CD4-positive, alpha-beta T cell (primary cell): ENCODE measurements at regions of chr22 and their contacts with region 1.

Region 1: GRCh38 chr22:31345331-31346254 is 553 bp downstream of the PATZ1 start:
- DNase-seq: peak; percentile 84 to 97 (median 90)
- ATAC-seq: peak; percentile 69
- H3K4me3 ChIP-seq: peak overlapping the region; percentile 88
- H3K4me3 Mint-ChIP-seq: peak overlapping the region; percentile 97
- H3K27ac ChIP-seq: peak overlapping the region in 1 of 2 donors; percentile 69
- H3K27ac Mint-ChIP-seq: peak overlapping the region; percentile 95
- H3K4me1 ChIP-seq: peaks cover 65% of the 10 kb centered on the region
- H3K4me1 Mint-ChIP-seq: peaks cover 54% of the 10 kb centered on the region
- H3K27me3 ChIP-seq: no peaks in the 10 kb centered on the region
- H3K27me3 Mint-ChIP-seq: no peaks in the 10 kb centered on the region
- CTCF ChIP-seq: peak; percentile 73

Region 2: GRCh38 chr22:29883045-29883774 is 1462.4 kb before region 1 on chr22 and contains the start of gene MTMR3:
- CTCF ChIA-PET with region 1: no interaction called
- POLR2A ChIA-PET with region 1: no interaction called
- intact Hi-C with region 1: loop called in 1 of 2 experiments (anchors 5 kb)
- DNase-seq: peak; percentile 69 to 96 (median 91)
- ATAC-seq: peak; percentile 75
- H3K4me3 ChIP-seq: peak within 1 kb of the TSS; percentile 96
- H3K4me3 Mint-ChIP-seq: peak within 1 kb of the TSS; percentile 96
- H3K27ac ChIP-seq: peak within 1 kb of the TSS; percentile 15 to 75
- H3K27ac Mint-ChIP-seq: peak within 1 kb of the TSS; percentile 87
- H3K4me1 ChIP-seq: peaks cover 22% of the 10 kb centered on the region
- H3K4me1 Mint-ChIP-seq: peaks cover 2% of the 10 kb centered on the region
- H3K27me3 ChIP-seq: no peaks in the 10 kb centered on the region
- H3K27me3 Mint-ChIP-seq: no peaks in the 10 kb centered on the region
- CTCF ChIP-seq: peak; percentile 51
- total RNA-seq, gene MTMR3: 57.8 to 60.6 TPM

Region 3: DNA sequence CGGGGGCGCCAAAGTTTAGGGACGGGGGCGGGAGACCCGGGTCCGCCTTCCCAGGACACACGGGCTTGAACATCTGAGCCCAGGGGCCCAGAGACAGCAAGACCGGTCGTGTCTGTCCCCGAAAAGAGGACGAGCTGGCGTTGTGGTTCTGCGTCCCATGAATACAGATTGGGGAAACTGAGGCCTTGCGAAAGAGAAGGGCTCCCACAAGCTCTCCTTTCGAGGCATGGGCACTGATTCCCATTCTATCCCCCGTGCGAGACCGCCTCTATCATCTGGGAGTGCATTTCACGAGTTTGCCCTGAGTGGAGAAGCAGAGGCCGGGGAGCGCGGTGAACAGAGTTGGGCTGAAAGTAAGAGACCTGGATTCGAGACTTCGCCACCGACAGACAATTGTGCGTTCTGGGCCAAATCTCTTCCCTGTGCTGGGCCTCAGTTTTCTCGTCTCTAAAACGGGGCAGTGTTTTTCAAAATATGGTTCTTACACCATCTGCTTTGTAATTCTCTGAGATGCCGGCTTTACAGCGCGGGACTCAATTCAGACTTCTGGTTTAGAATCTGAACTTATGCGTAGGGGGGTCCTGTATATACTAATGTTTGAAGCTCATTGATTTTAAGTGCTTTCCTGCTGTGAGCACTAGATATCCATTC is 185.1 kb before region 1 on chr22:
- CTCF ChIA-PET with region 1: interaction called, 3 read pairs
- POLR2A ChIA-PET with region 1: interaction called, 7 read pairs
- intact Hi-C with region 1: loop called in 1 of 2 experiments (anchors 5 kb)
- DNase-seq: peak in 8 of 14 experiments; percentile 0 to 45 (median 7)
- ATAC-seq: peak; percentile 46
- H3K4me3 ChIP-seq: peak overlapping the region; percentile 96
- H3K4me3 Mint-ChIP-seq: peak overlapping the region; percentile 100
- H3K27ac ChIP-seq: peak overlapping the region; percentile 69 to 94
- H3K27ac Mint-ChIP-seq: peak overlapping the region; percentile 89
- H3K4me1 ChIP-seq: peaks cover 23% of the 10 kb centered on the region
- H3K4me1 Mint-ChIP-seq: peaks cover 48% of the 10 kb centered on the region
- H3K27me3 ChIP-seq: no peaks in the 10 kb centered on the region
- H3K27me3 Mint-ChIP-seq: no peaks in the 10 kb centered on the region
- CTCF ChIP-seq: no peak

Region 4: DNA sequence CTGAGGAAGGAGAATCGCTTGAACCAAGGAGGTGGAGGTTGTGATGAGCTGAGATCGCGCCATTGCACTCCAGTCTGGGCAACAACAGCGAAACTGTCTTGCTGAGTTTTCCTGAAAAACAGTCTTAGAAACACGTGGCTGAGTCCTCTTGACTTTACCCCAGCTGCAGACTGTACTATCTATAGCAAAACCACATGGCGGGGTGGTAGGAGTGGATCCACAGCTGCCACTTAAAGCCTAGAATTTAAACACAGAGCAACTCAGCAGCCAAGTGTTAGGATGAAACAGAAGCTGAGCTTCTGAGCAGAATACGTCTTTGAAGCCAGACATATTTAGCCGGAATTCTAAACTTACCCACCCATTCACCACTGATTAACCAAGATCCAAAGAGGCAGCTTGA is 13.6 kb before region 1 on chr22:
- CTCF ChIA-PET with region 1: no interaction called
- POLR2A ChIA-PET with region 1: interaction called, 10 read pairs
- intact Hi-C with region 1: no loop called
- DNase-seq: no peak
- ATAC-seq: no peak
- H3K4me3 ChIP-seq: no peak overlapping the region
- H3K4me3 Mint-ChIP-seq: no peak overlapping the region
- H3K27ac ChIP-seq: no peak overlapping the region
- H3K27ac Mint-ChIP-seq: no peak overlapping the region
- H3K4me1 ChIP-seq: peaks cover 4% of the 10 kb centered on the region
- H3K4me1 Mint-ChIP-seq: peaks cover 46% of the 10 kb centered on the region
- H3K27me3 ChIP-seq: no peaks in the 10 kb centered on the region
- H3K27me3 Mint-ChIP-seq: no peaks in the 10 kb centered on the region
- CTCF ChIP-seq: no peak

Region 5: DNA sequence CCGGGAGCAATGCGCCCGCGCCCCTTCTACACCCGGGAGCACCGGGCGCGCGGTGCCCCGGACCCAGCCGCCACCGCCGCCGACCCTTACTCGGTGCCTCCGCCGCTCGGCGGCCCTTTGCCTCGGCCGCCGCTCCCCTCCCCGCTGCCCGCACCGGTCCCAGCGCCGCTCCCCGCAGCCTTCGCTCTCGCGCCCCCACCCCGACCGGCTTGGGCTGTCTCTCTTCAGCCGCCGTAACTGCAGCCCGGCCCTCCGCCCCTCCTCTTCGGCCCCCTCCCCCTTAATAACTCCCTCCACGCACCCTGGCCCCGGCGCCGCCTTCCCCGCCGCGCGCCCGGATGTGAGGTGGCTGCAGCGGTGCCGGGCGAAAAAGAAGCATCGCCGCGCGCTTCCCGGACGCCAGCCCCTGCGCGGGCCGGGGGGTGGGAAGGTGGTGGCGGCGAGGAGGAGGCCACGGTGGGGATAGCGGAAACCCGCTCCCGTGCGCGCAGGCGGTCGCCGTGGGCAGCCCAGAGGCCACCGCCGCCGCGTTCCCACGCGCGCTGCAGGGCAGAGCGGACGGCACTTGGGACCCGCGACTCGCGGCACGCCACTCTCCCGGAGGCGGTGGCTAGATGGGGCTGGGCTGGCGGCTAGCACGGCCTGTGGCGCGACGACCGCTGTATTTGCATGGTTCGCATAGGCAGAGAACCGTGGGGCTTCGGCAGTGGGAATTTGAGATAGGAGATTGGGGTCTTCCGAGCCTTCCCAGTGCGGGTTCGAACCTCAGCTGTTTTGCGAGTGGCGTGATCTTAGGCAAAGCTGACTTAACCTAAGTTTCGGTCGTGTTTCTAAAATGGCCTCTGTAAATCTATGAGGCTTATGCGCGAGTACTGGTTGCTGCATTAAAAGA is 144.3 kb after region 1 on chr22 and contains the start of gene EIF4ENIF1:
- CTCF ChIA-PET with region 1: no interaction called
- POLR2A ChIA-PET with region 1: interaction called, 9 read pairs
- intact Hi-C with region 1: loop called (anchors 2 to 5 kb)
- DNase-seq: peak; percentile 78 to 93 (median 84)
- ATAC-seq: peak; percentile 77
- H3K4me3 ChIP-seq: peak within 1 kb of the TSS; percentile 78
- H3K4me3 Mint-ChIP-seq: peak within 1 kb of the TSS; percentile 91
- H3K27ac ChIP-seq: peak within 1 kb of the TSS; percentile 88 to 92
- H3K27ac Mint-ChIP-seq: peak within 1 kb of the TSS; percentile 97
- H3K4me1 ChIP-seq: peaks cover 38% of the 10 kb centered on the region
- H3K4me1 Mint-ChIP-seq: peaks cover 57% of the 10 kb centered on the region
- H3K27me3 ChIP-seq: no peaks in the 10 kb centered on the region
- H3K27me3 Mint-ChIP-seq: no peaks in the 10 kb centered on the region
- CTCF ChIP-seq: no peak
- total RNA-seq, gene EIF4ENIF1: 9.4 to 10.6 TPM

Region 6: DNA sequence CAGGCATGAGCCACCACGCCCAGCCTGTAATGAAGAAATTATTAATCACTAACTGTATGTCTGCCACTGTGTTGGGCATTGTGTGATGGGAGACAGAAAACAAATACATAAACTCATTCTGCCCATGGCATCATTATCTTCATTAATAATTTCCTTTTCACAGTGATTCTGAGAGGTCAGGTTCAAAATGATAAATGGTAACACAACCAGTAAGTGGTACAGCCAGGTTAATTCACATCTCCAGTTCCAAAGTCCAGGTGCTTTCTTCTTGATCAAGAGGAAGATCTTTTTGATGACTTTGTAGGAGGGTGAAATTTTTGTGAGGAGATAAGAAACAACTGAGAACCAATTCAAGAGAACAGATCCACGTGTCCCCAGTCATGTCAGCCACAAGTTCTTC is 249.7 kb after region 1 on chr22:
- CTCF ChIA-PET with region 1: no interaction called
- POLR2A ChIA-PET with region 1: no interaction called
- intact Hi-C with region 1: no loop called
- DNase-seq: no peak
- ATAC-seq: no peak
- H3K4me3 ChIP-seq: no peak overlapping the region
- H3K4me3 Mint-ChIP-seq: no peak overlapping the region
- H3K27ac ChIP-seq: no peak overlapping the region
- H3K27ac Mint-ChIP-seq: peak overlapping the region; percentile 9
- H3K4me1 ChIP-seq: no peaks in the 10 kb centered on the region
- H3K4me1 Mint-ChIP-seq: no peaks in the 10 kb centered on the region
- H3K27me3 ChIP-seq: no peaks in the 10 kb centered on the region
- H3K27me3 Mint-ChIP-seq: no peaks in the 10 kb centered on the region
- CTCF ChIP-seq: no peak

Region 7: DNA sequence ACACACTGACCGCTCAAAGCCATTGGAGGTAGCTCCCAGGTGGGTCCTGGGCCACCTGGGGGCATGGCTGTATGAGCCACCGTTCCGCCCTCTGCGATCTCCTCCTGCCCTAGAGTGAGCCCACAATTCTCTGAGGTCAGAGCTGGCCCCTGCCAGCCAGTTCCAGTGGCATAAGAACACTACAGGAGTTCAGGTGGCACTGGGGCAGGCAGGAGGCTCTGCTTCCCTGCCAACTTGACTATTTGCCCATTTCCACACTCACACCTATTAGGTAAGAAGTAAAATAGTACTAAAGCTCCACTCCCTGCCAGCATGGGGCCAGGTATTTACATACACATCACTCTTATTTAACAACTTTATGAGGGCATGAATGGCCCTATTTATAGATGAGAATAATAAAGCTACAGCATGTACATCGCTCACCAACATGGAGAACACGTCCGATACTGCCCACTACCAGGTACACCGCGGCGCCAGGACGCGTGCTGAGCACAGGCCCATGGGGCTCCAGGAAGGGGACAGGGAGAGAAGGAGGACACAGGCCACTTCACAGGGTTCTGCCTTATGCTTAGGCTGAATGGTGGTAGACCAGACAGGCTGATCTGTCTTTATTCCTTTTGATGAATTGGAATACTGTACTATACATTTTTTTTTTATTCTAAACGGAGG is 290.2 kb after region 1 on chr22:
- CTCF ChIA-PET with region 1: no interaction called
- POLR2A ChIA-PET with region 1: interaction called, 16 read pairs
- intact Hi-C with region 1: loop called (anchors 2 kb)
- DNase-seq: no peak
- ATAC-seq: no peak
- H3K4me3 ChIP-seq: no peak overlapping the region
- H3K4me3 Mint-ChIP-seq: peak overlapping the region; percentile 39
- H3K27ac ChIP-seq: no peak overlapping the region
- H3K27ac Mint-ChIP-seq: peak overlapping the region; percentile 28
- H3K4me1 ChIP-seq: peaks cover 43% of the 10 kb centered on the region
- H3K4me1 Mint-ChIP-seq: peaks cover 44% of the 10 kb centered on the region
- H3K27me3 ChIP-seq: no peaks in the 10 kb centered on the region
- H3K27me3 Mint-ChIP-seq: no peaks in the 10 kb centered on the region
- CTCF ChIP-seq: no peak

Region 8: GRCh38 chr22:31676700-31677099 is 331.1 kb after region 1 on chr22:
- CTCF ChIA-PET with region 1: no interaction called
- POLR2A ChIA-PET with region 1: interaction called, 6 read pairs
- intact Hi-C with region 1: loop called in 1 of 2 experiments (anchors 5 kb)
- DNase-seq: peak; percentile 85 to 96 (median 90)
- ATAC-seq: peak; percentile 100
- H3K4me3 ChIP-seq: peak overlapping the region; percentile 69
- H3K4me3 Mint-ChIP-seq: peak overlapping the region; percentile 94
- H3K27ac ChIP-seq: peak overlapping the region in 1 of 2 donors; percentile 77
- H3K27ac Mint-ChIP-seq: peak overlapping the region; percentile 90
- H3K4me1 ChIP-seq: peaks cover 11% of the 10 kb centered on the region
- H3K4me1 Mint-ChIP-seq: peaks cover 10% of the 10 kb centered on the region
- H3K27me3 ChIP-seq: no peaks in the 10 kb centered on the region
- H3K27me3 Mint-ChIP-seq: no peaks in the 10 kb centered on the region
- CTCF ChIP-seq: no peak